ENCODE measurements at regions of chr11 and their contacts with region 1.

Region 1: GRCh38 chr11:113234888-113235287 is 79.5 kb upstream of the TTC12 start:
- DNase-seq: no peak
- ATAC-seq: no peak
- H3K4me3 ChIP-seq: no peak overlapping the region
- H3K27ac ChIP-seq: no peak overlapping the region
- H3K4me1 ChIP-seq: no peaks in the 10 kb centered on the region
- H3K27me3 ChIP-seq: no peaks in the 10 kb centered on the region
- CTCF ChIP-seq: no peak
- POLR2A ChIP-seq: no peak

Region 2: DNA sequence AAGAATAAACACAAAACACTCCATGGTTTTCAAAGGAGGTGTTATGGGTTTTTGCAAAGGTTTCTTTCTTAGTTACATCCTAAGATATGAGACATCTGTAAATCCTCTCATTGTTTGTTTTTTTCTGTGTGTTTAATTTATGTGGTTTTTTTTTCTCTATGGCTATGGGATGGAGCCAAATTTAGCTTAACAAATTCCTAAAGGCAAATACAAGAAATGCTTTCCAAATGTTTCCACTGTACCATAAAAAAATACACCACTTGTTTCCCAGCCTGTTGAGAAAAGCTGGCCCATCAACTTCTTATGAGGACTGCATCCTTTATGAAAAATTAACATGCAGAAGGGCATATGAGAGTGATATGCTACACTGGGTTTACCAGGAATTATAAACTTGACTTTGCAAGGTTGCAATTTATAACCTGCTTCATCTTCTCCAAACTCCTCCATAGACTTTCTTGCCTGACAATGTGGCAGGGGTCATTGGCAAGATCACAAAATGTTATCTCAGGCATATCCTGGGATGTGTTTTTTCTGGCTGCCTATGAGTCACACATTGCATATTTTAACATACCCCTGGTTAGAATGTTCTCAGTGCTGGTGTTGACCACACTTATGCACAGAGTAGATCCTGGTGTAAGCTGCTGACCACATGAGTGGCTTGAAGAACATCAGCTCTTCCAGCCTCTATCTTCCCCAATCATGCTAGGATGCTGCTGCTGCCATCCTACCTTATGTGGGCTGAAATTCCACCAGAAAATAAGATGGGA is 58.1 kb before region 1 on chr11:
- intact Hi-C with region 1: loop called (anchors 10 kb)
- DNase-seq: no peak
- ATAC-seq: no peak
- H3K4me3 ChIP-seq: no peak overlapping the region
- H3K27ac ChIP-seq: no peak overlapping the region
- H3K4me1 ChIP-seq: no peaks in the 10 kb centered on the region
- H3K27me3 ChIP-seq: no peaks in the 10 kb centered on the region
- CTCF ChIP-seq: no peak
- POLR2A ChIP-seq: no peak

Measured in body of pancreas (tissue), 4 donors.